ENCODE measurements at regions of chr3 and their contacts with region 1.

Region 1: GRCh38 chr3:170221924-170222646 is at the start of gene PRKCI:
- DNase-seq: peak; percentile 63 to 88 (median 83)
- ATAC-seq: peak; percentile 96
- H3K4me3 ChIP-seq: peak within 1 kb of the TSS; percentile 98
- H3K4me3 Mint-ChIP-seq: peak within 1 kb of the TSS; percentile 75 to 97 (median 95)
- H3K27ac ChIP-seq: peak within 1 kb of the TSS; percentile 75
- H3K27ac Mint-ChIP-seq: peak within 1 kb of the TSS; percentile 82 to 97 (median 95)
- H3K4me1 ChIP-seq: peaks cover 0 to 3% of the 10 kb centered on the region in 2 donors
- H3K4me1 Mint-ChIP-seq: peaks cover 15 to 50% (median 38%) of the 10 kb centered on the region in 7 donors
- H3K27me3 ChIP-seq: no peaks in the 10 kb centered on the region
- H3K27me3 Mint-ChIP-seq: peaks cover 0 to 4% (median 0%) of the 10 kb centered on the region in 5 donors
- total RNA-seq, gene PRKCI: 14.7 to 26.2 (median 20.5) TPM

Region 2: DNA sequence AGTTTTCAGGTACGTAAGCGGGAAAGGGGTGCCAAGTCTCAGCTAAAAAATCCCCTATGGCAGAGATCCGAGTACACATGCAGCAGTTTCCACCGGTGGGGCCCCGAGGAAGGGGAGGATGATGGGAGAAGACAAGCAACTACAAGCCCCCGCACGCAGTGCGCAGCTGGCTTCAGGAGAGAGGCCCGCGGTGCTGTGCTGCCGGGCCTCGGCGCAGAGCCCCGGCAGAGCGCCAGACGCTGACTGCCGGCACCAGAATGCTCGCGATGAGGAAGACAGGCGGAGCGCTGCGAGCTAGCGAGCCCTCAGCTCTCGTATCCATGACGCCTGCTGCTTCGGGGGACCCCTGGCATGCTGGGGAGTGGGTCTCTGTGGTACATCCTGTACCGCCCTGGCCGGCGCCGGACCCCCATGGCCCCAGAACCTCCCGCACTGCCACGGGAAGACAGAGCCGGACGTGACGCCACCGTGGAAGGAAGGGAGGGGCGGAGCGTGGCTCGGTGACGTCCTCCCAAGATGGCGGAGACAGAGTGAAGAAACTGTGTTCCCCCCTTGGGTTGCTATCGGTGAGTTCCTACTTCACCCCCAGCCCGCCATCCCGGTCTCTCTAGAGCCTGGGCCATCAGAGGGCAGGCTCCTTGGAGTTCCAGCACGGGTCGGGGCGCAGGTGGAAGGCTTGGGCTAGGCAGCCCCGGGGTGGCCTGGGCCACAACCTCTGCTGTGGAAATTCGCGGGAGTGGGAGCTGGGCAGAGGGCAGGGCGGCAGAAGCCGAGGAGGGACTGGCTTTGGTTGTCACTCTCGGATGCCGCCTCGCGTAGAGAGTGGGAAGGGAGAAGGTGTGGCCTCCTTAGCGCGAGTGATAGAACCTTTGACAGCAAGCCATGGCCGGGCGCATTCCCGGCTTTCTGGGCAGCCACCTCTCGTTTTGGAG is 448.9 kb before region 1 on chr3 and contains the start of gene MYNN:
- CTCF ChIA-PET with region 1: no interaction called
- POLR2A ChIA-PET with region 1: interaction called, 3 read pairs
- intact Hi-C with region 1: loop called (anchors 1 to 2 kb)
- DNase-seq: peak; percentile 87 to 95 (median 93)
- ATAC-seq: peak; percentile 90
- H3K4me3 ChIP-seq: peak within 1 kb of the TSS; percentile 87
- H3K4me3 Mint-ChIP-seq: peak within 1 kb of the TSS; percentile 91 to 99 (median 97)
- H3K27ac ChIP-seq: peak within 1 kb of the TSS; percentile 100
- H3K27ac Mint-ChIP-seq: peak within 1 kb of the TSS; percentile 96 to 100 (median 99)
- H3K4me1 ChIP-seq: peaks cover 15 to 22% of the 10 kb centered on the region in 2 donors
- H3K4me1 Mint-ChIP-seq: peaks cover 18 to 69% (median 56%) of the 10 kb centered on the region in 7 donors
- H3K27me3 ChIP-seq: no peaks in the 10 kb centered on the region
- H3K27me3 Mint-ChIP-seq: peaks cover 0 to 5% (median 0%) of the 10 kb centered on the region in 5 donors
- total RNA-seq, gene MYNN: 16.2 to 20.8 (median 19.0) TPM

Region 3: DNA sequence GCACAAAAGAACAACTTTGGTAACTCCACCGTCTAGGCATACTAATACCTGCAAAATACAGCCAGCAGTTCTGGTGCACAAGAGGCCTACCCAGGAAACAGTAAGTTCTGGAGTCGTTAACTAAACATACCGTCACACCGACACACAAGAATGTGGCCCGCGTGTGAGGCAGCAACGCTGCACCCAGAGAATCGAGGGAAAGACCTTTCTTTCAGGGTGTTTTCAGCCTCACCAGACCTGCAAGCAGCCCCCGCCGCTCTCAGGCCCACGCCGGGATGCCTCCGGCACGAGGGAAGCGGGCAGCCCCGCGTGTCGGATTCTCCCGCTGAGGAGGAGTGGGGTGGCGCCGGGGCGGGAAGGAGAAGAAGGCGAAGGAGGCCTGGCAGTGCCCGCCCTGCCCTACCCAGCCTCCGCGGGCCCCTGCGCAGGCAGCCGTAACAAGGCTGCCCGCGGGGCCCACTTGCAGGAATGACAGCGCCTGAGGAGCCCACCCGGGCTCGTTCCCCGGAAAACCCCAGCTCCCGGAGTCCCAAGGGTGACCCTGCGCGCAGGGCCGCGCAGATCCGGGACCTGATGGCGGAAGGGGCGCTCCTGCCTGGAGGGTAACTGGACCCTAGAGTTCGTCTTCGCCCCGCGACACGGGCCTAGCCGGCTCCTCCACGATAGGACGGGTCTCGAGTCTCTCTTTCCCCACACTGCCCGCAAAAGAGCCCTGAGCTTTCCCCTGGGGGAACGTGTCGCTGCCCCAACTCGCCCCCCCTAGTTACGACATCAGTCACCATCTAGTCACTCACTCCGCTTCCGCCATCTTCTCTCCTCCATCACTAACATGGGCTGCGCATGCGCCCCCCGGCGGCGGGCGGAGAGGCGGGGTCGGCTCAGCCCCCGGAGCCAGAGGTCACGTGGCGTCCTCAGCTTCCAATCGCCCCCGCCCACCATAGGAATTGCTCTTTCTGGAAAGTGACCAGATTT is 40.9 kb before region 1 on chr3 and contains the start of gene PHC3:
- CTCF ChIA-PET with region 1: no interaction called
- POLR2A ChIA-PET with region 1: interaction called, 24 read pairs
- intact Hi-C with region 1: loop called (anchors 1 kb)
- DNase-seq: peak; percentile 88 to 95 (median 92)
- ATAC-seq: peak; percentile 86
- H3K4me3 ChIP-seq: peak within 1 kb of the TSS; percentile 93
- H3K4me3 Mint-ChIP-seq: peak within 1 kb of the TSS; percentile 88 to 100 (median 99)
- H3K27ac ChIP-seq: peak within 1 kb of the TSS; percentile 98
- H3K27ac Mint-ChIP-seq: peak within 1 kb of the TSS; percentile 96 to 100 (median 100)
- H3K4me1 ChIP-seq: peaks cover 19 to 39% of the 10 kb centered on the region in 2 donors
- H3K4me1 Mint-ChIP-seq: peaks cover 19 to 40% (median 33%) of the 10 kb centered on the region in 7 donors
- H3K27me3 ChIP-seq: no peaks in the 10 kb centered on the region
- H3K27me3 Mint-ChIP-seq: peaks cover 0 to 2% (median 0%) of the 10 kb centered on the region in 5 donors
- total RNA-seq, gene PHC3: 78.9 to 215 (median 158) TPM

Region 4: GRCh38 chr3:170258105-170258487 is 36.0 kb after region 1 on chr3:
- CTCF ChIA-PET with region 1: interaction called, 4 read pairs
- POLR2A ChIA-PET with region 1: no interaction called
- intact Hi-C with region 1: loop called in 1 of 2 experiments (anchors 2 kb)
- DNase-seq: no peak
- ATAC-seq: no peak
- H3K4me3 ChIP-seq: no peak overlapping the region
- H3K4me3 Mint-ChIP-seq: peak overlapping the region in 1 of 10 donors; percentile 73
- H3K27ac ChIP-seq: no peak overlapping the region
- H3K27ac Mint-ChIP-seq: peak overlapping the region in 1 of 9 donors; percentile 13
- H3K4me1 ChIP-seq: no peaks in the 10 kb centered on the region
- H3K4me1 Mint-ChIP-seq: peaks cover 2 to 33% (median 24%) of the 10 kb centered on the region in 7 donors
- H3K27me3 ChIP-seq: no peaks in the 10 kb centered on the region
- H3K27me3 Mint-ChIP-seq: no peaks in the 10 kb centered on the region

Region 5: DNA sequence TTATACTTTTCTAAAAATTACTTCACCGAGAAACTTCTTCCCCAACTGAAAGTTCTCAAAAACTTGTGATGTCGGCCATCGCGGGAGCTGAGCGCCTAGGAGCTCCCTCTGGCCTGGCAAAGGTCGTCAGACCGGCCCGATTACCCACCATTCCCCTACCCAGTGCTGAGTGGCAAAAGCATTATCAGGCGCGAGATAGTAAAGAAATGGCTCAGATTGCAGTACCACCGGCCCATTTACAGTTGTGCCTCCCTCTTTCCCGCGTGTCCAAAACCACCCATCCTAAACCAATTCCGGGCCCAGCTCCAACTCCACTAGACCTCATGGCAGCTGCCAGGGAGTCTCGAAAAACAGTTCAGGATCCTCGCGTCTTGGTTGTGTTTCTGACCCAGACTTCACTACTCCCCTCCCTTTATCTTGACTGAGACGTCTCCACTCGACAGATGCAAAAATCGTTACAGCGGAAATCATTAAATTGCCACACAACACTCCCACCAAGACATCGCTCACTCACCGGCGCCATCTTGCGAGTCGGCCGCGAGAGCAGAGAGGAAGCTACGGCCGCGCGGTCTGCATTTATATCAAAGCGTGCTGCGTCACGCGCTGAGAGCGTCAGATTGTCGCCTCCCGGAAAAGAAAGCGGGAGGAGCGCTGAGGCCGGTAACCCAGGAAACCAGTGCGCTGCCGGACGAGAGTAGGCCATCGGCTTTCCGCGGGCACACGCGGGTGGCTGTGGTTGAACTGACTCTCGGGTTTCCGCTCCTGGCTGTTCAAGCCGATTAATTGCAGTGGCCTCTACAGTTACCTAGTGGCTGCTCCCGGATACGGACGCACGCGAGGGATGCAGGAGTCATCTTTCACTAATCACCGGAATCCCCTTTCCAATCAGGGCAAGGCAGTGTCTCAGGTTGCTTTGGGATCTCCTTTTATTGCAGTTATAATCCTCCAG is 647.8 kb after region 1 on chr3 and contains the start of gene RPL22L1:
- CTCF ChIA-PET with region 1: no interaction called
- POLR2A ChIA-PET with region 1: no interaction called
- intact Hi-C with region 1: loop called (anchors 5 kb)
- DNase-seq: peak; percentile 83 to 92 (median 90)
- ATAC-seq: peak; percentile 96
- H3K4me3 ChIP-seq: peak within 1 kb of the TSS; percentile 84
- H3K4me3 Mint-ChIP-seq: peak within 1 kb of the TSS; percentile 93 to 98 (median 94)
- H3K27ac ChIP-seq: peak within 1 kb of the TSS; percentile 86
- H3K27ac Mint-ChIP-seq: peak within 1 kb of the TSS; percentile 96 to 99 (median 98)
- H3K4me1 ChIP-seq: peaks cover 22% of the 10 kb centered on the region in 2 donors
- H3K4me1 Mint-ChIP-seq: peaks cover 10 to 41% (median 26%) of the 10 kb centered on the region in 7 donors
- H3K27me3 ChIP-seq: no peaks in the 10 kb centered on the region
- H3K27me3 Mint-ChIP-seq: peaks cover 0 to 4% (median 0%) of the 10 kb centered on the region in 5 donors
- total RNA-seq, gene RPL22L1: 27.5 to 62.6 (median 47.9) TPM

Measured in naive thymus-derived CD4-positive, alpha-beta T cell (primary cell).